B cell (primary cell): ENCODE measurements at regions of chr11 and their contacts with region 1.

Region 1: DNA sequence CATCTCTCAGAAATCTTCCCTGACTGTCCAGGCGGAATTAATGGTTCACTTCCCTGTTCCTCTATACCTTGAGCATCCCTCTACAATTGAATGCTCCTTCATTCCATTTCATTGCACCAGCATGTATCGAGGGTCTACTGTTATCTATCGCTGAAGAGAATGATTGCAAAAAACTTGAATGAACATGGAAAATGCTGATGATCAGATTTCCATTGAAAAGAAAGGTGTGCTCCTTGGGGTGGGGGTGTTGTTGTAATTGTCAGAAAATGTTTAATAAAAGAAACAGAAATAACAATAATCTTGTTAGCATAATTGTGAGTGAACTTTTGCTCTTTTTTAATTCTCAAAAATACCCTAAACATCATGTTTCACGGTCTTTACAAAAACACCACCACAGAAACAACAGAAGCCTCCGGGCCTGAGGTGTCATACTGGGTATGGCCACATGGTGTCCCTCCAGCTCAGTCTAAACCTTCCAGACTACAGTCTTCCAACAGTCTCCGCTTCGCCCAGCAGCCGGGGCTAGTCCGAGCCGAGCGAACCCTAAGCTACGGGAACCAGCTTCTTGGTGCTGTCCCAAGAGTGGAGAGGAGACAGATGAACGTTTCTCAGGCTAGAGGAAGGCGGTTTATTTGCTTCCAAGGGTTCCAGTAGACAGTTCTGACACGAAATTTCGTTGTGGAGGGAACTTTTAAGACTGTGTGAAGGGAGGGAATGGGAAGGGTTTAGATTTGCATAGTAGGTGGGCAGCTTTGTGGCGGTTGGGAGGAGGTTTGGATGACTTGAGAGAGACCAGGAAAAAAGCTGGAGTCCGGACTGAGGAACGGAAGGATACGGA is 75.8 kb upstream of the ZBED5 start:
- DNase-seq: peak; percentile 88
- ATAC-seq: peak; percentile 96
- H3K4me3 ChIP-seq: peak overlapping the region; percentile 38 to 68 (median 58)
- H3K4me3 Mint-ChIP-seq: peak overlapping the region; percentile 79
- H3K27ac ChIP-seq: no peak overlapping the region
- H3K27ac Mint-ChIP-seq: peak overlapping the region; percentile 3
- H3K4me1 ChIP-seq: peaks cover 22 to 24% of the 10 kb centered on the region in 2 donors
- H3K4me1 Mint-ChIP-seq: peaks cover 16% of the 10 kb centered on the region
- H3K27me3 ChIP-seq: peaks cover 0 to 43% (median 27%) of the 10 kb centered on the region in 4 experiments
- H3K27me3 Mint-ChIP-seq: peaks cover 22% of the 10 kb centered on the region
- CTCF ChIP-seq: peak; percentile 97

Region 2: DNA sequence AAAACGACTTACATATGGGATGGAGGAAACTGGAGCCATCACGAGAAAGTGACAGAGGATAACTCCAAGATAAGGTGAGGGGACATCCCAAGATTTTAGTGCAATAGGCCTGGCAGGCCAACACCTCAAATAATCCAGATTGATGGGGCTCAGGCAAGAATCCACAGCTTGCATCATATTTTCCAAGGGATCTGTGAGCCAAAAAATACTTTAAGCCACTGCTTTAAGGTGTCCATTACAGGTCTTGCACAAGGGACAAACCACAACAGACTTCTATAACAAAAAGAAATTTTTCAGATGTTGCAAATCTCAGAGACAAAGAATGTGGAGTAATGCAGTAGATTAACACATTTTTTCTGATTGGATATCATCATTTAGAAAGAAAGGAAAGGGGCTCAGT is 1714.1 kb before region 1 on chr11:
- CTCF ChIA-PET with region 1: no interaction called
- POLR2A ChIA-PET with region 1: no interaction called
- intact Hi-C with region 1: no loop called
- DNase-seq: no peak
- ATAC-seq: no peak
- H3K4me3 ChIP-seq: no peak overlapping the region
- H3K4me3 Mint-ChIP-seq: no peak overlapping the region
- H3K27ac ChIP-seq: no peak overlapping the region
- H3K27ac Mint-ChIP-seq: no peak overlapping the region
- H3K4me1 ChIP-seq: peaks cover 4 to 11% of the 10 kb centered on the region in 2 donors
- H3K4me1 Mint-ChIP-seq: peaks cover 12% of the 10 kb centered on the region
- H3K27me3 ChIP-seq: no peaks in the 10 kb centered on the region
- H3K27me3 Mint-ChIP-seq: no peaks in the 10 kb centered on the region
- CTCF ChIP-seq: no peak

Region 3: DNA sequence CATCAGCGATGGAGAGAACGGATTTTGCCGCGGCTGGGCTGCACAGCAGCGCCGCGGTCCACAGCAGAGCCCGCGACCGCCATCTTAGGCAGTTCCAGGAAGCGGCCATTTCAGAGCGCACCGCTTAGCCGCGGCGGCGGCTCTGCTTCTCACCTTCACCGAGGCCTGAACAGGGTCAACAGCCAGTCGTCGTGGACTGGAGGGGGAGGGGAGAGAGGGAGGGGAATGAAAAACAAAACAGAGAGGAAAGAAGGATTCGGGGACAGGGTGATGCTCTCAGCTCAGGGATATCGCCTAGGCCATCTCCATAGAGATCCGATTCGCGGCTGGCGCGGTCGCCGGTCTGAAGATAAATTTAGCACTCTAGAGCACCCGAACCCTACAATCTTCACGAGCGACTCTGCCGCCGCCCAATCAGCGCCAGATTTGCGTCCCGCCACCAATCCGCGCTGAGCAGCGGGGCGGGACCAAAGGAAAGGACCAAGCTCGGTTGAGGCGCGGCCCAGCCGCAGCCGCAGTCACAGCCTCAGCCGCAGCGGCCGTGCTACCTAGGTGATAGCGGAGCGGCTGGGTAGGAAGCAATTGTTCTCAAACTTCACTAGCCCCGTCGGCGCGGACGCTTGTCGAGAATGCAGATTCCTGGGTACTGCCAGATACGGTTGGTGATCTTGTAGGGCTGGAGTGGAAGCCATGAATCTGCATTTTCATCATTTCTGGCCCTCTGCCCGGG is 75.8 kb before region 1 on chr11 and contains the start of gene ZBED5:
- CTCF ChIA-PET with region 1: interaction called, 4 read pairs
- POLR2A ChIA-PET with region 1: interaction called, 12 read pairs
- intact Hi-C with region 1: loop called (anchors 2 kb)
- DNase-seq: peak; percentile 98
- ATAC-seq: peak; percentile 87
- H3K4me3 ChIP-seq: peak within 1 kb of the TSS; percentile 68 to 98 (median 95)
- H3K4me3 Mint-ChIP-seq: peak within 1 kb of the TSS; percentile 98
- H3K27ac ChIP-seq: peak within 1 kb of the TSS; percentile 90 to 98
- H3K27ac Mint-ChIP-seq: peak within 1 kb of the TSS; percentile 99
- H3K4me1 ChIP-seq: peaks cover 21 to 23% of the 10 kb centered on the region in 2 donors
- H3K4me1 Mint-ChIP-seq: peaks cover 40% of the 10 kb centered on the region
- H3K27me3 ChIP-seq: no peaks in the 10 kb centered on the region
- H3K27me3 Mint-ChIP-seq: no peaks in the 10 kb centered on the region
- CTCF ChIP-seq: no peak
- total RNA-seq, gene ZBED5: 168 and 178 TPM in 2 replicates

Region 4: DNA sequence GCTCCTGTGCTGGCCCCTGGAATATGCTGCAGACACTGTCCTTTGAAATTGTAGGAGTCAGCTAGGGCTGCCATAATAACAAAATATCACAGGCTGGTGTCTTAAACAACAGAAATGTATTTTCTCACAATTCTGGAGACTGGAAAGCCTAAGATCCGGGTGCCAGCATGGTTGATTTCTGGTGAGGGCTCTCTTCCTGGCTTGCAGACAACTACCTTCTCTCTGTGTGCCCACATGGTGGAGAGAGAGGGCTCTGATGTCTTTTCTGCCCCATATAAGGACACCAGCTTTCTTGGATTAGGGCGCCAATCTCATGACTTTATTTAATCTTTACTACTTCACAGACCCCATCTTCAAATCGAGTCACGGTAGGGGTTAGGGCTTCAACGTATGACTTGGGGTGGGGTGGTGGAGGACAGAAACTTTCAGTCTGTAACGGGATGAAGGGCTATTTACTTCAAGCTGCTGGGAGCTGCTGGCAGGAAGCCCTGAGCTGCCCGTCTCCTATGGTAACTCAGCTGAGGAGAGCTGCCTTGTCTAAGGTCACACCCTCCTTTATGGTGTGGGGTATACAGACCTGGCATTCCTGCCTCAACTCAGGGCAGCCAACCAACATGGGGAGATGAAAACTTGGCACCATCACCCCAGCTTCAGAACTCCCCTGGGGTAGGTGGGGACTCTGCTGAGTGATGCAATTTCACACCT is 67.1 kb after region 1 on chr11:
- CTCF ChIA-PET with region 1: interaction called, 47 read pairs
- POLR2A ChIA-PET with region 1: no interaction called
- intact Hi-C with region 1: no loop called
- DNase-seq: no peak
- ATAC-seq: no peak
- H3K4me3 ChIP-seq: no peak overlapping the region
- H3K4me3 Mint-ChIP-seq: no peak overlapping the region
- H3K27ac ChIP-seq: no peak overlapping the region
- H3K27ac Mint-ChIP-seq: no peak overlapping the region
- H3K4me1 ChIP-seq: peaks cover 4 to 6% of the 10 kb centered on the region in 2 donors
- H3K4me1 Mint-ChIP-seq: peaks cover 15% of the 10 kb centered on the region
- H3K27me3 ChIP-seq: peaks cover 0 to 17% (median 7%) of the 10 kb centered on the region in 4 experiments
- H3K27me3 Mint-ChIP-seq: peaks cover 31% of the 10 kb centered on the region
- CTCF ChIP-seq: no peak

Region 5: GRCh38 chr11:11022125-11022730 is 88.6 kb after region 1 on chr11:
- CTCF ChIA-PET with region 1: interaction called, 155 read pairs
- POLR2A ChIA-PET with region 1: interaction called, 3 read pairs
- intact Hi-C with region 1: loop called (anchors 1 kb)
- DNase-seq: peak; percentile 56
- ATAC-seq: no peak
- H3K4me3 ChIP-seq: no peak overlapping the region
- H3K4me3 Mint-ChIP-seq: no peak overlapping the region
- H3K27ac ChIP-seq: no peak overlapping the region
- H3K27ac Mint-ChIP-seq: no peak overlapping the region
- H3K4me1 ChIP-seq: no peaks in the 10 kb centered on the region
- H3K4me1 Mint-ChIP-seq: peaks cover 8% of the 10 kb centered on the region
- H3K27me3 ChIP-seq: peaks cover 0 to 3% (median 0%) of the 10 kb centered on the region in 4 experiments
- H3K27me3 Mint-ChIP-seq: peaks cover 6% of the 10 kb centered on the region
- CTCF ChIP-seq: peak; percentile 77

Region 6: DNA sequence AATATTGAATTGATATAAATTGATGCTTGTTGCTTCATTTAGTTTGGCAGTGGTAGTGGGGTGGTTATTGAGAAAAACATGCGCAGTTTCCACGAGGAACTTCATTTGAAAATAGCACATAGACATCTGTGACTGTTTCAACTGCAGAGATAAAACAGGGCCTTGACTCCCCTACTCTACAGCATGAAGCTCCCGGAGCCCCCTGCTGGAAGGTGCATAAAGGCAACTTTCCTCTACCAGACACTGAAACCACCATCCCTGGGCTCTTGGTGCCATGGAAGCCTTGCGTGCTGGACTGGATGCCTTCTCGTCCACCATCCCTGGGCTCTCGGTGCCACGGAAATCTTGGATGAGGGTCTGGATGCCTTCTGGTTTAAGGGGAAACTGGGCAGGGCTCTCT is 223.5 kb after region 1 on chr11:
- CTCF ChIA-PET with region 1: no interaction called
- POLR2A ChIA-PET with region 1: no interaction called
- intact Hi-C with region 1: loop called (anchors 5 kb)
- DNase-seq: no peak
- ATAC-seq: no peak
- H3K4me3 ChIP-seq: no peak overlapping the region
- H3K4me3 Mint-ChIP-seq: no peak overlapping the region
- H3K27ac ChIP-seq: no peak overlapping the region
- H3K27ac Mint-ChIP-seq: no peak overlapping the region
- H3K4me1 ChIP-seq: peaks cover 0 to 7% of the 10 kb centered on the region in 2 donors
- H3K4me1 Mint-ChIP-seq: peaks cover 3% of the 10 kb centered on the region
- H3K27me3 ChIP-seq: peaks cover 0 to 8% (median 0%) of the 10 kb centered on the region in 4 experiments
- H3K27me3 Mint-ChIP-seq: peaks cover 21% of the 10 kb centered on the region
- CTCF ChIP-seq: no peak

Region 7: DNA sequence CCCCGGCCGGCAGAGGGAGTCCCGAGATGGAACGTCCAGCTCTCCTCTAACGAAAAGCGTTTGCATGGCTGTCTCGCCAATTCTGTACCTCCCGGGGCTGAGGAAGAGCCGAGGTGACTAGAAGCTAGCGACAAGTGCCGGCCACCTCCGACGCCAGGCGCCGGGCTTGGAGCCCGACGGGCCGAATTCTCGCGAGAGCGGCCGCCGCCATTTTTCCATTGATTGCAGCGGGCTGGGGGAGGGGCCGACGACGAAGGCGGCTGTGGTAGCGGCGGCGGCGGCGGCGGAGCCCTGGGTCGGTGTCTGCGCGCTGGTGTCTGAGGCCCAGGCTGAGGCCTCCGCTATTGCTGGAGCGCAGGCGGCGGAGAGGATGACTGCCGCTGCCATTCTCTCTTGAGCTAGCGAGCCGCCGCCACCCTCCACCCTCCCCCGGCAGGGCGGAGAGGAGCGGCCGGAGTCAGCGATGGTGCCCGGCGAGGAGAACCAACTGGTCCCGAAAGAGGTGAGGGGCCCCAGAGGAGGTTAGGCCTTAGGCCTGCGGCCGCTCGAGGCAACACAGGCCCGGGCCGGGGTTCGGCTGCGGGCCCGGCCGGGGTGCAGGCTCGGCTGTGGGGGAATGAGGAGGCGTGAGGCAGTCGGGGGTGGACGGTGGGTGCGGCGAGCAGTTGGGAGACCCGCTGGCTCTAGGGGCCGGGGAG is 908.2 kb after region 1 on chr11 and contains the start of gene USP47:
- CTCF ChIA-PET with region 1: no interaction called
- POLR2A ChIA-PET with region 1: no interaction called
- intact Hi-C with region 1: loop called (anchors 5 kb)
- DNase-seq: peak; percentile 96
- ATAC-seq: peak; percentile 81
- H3K4me3 ChIP-seq: peak within 1 kb of the TSS; percentile 85 to 95 (median 92)
- H3K4me3 Mint-ChIP-seq: no peak within 1 kb of the TSS
- H3K27ac ChIP-seq: peak within 1 kb of the TSS; percentile 87 to 98
- H3K27ac Mint-ChIP-seq: no peak within 1 kb of the TSS
- H3K4me1 ChIP-seq: peaks cover 31 to 43% of the 10 kb centered on the region in 2 donors
- H3K4me1 Mint-ChIP-seq: peaks cover 28% of the 10 kb centered on the region
- H3K27me3 ChIP-seq: peaks cover 0 to 6% (median 2%) of the 10 kb centered on the region in 4 experiments
- H3K27me3 Mint-ChIP-seq: peaks cover 9% of the 10 kb centered on the region
- CTCF ChIP-seq: peak; percentile 40
- total RNA-seq, gene USP47: 52.9 and 61.1 TPM in 2 replicates

Region 8: GRCh38 chr11:12461516-12461915 is 1527.8 kb after region 1 on chr11:
- CTCF ChIA-PET with region 1: no interaction called
- POLR2A ChIA-PET with region 1: no interaction called
- intact Hi-C with region 1: no loop called
- DNase-seq: no peak
- ATAC-seq: no peak
- H3K4me3 ChIP-seq: no peak overlapping the region
- H3K4me3 Mint-ChIP-seq: no peak overlapping the region
- H3K27ac ChIP-seq: no peak overlapping the region
- H3K27ac Mint-ChIP-seq: no peak overlapping the region
- H3K4me1 ChIP-seq: no peaks in the 10 kb centered on the region
- H3K4me1 Mint-ChIP-seq: no peaks in the 10 kb centered on the region
- H3K27me3 ChIP-seq: no peaks in the 10 kb centered on the region
- H3K27me3 Mint-ChIP-seq: peaks cover 8% of the 10 kb centered on the region
- CTCF ChIP-seq: no peak